CD4-positive, alpha-beta T cell (primary cell): ENCODE measurements at regions of chr6 and their contacts with region 1.

Region 1: GRCh38 chr6:53189554-53189953 is 40.9 kb upstream of the GCM1 start:
- DNase-seq: no peak
- ATAC-seq: no peak
- H3K4me3 ChIP-seq: no peak overlapping the region
- H3K4me3 Mint-ChIP-seq: no peak overlapping the region
- H3K27ac ChIP-seq: no peak overlapping the region
- H3K27ac Mint-ChIP-seq: no peak overlapping the region
- H3K4me1 ChIP-seq: peaks cover 21% of the 10 kb centered on the region
- H3K4me1 Mint-ChIP-seq: peaks cover 22% of the 10 kb centered on the region
- H3K27me3 ChIP-seq: no peaks in the 10 kb centered on the region
- H3K27me3 Mint-ChIP-seq: no peaks in the 10 kb centered on the region
- CTCF ChIP-seq: no peak

Region 2: GRCh38 chr6:53239526-53239925 is 50.0 kb after region 1 on chr6:
- CTCF ChIA-PET with region 1: no interaction called
- POLR2A ChIA-PET with region 1: no interaction called
- intact Hi-C with region 1: loop called in 1 of 2 experiments (anchors 5 kb)
- DNase-seq: no peak
- ATAC-seq: no peak
- H3K4me3 ChIP-seq: no peak overlapping the region
- H3K4me3 Mint-ChIP-seq: no peak overlapping the region
- H3K27ac ChIP-seq: no peak overlapping the region
- H3K27ac Mint-ChIP-seq: no peak overlapping the region
- H3K4me1 ChIP-seq: peaks cover 16% of the 10 kb centered on the region
- H3K4me1 Mint-ChIP-seq: peaks cover 50% of the 10 kb centered on the region
- H3K27me3 ChIP-seq: no peaks in the 10 kb centered on the region
- H3K27me3 Mint-ChIP-seq: no peaks in the 10 kb centered on the region
- CTCF ChIP-seq: no peak

Region 3: GRCh38 chr6:53335208-53335994 is 145.8 kb after region 1 on chr6:
- CTCF ChIA-PET with region 1: no interaction called
- POLR2A ChIA-PET with region 1: no interaction called
- intact Hi-C with region 1: no loop called
- DNase-seq: peak; percentile 53 to 93 (median 72)
- ATAC-seq: peak; percentile 77
- H3K4me3 ChIP-seq: peak overlapping the region; percentile 60
- H3K4me3 Mint-ChIP-seq: peak overlapping the region; percentile 89
- H3K27ac ChIP-seq: peak overlapping the region; percentile 97 to 98
- H3K27ac Mint-ChIP-seq: peak overlapping the region; percentile 99
- H3K4me1 ChIP-seq: peaks cover 77% of the 10 kb centered on the region
- H3K4me1 Mint-ChIP-seq: peaks cover 94% of the 10 kb centered on the region
- H3K27me3 ChIP-seq: no peaks in the 10 kb centered on the region
- H3K27me3 Mint-ChIP-seq: no peaks in the 10 kb centered on the region
- CTCF ChIP-seq: no peak